CD4-positive, alpha-beta T cell (primary cell): ENCODE measurements at regions of chr17 and their contacts with region 1.

Region 1: DNA sequence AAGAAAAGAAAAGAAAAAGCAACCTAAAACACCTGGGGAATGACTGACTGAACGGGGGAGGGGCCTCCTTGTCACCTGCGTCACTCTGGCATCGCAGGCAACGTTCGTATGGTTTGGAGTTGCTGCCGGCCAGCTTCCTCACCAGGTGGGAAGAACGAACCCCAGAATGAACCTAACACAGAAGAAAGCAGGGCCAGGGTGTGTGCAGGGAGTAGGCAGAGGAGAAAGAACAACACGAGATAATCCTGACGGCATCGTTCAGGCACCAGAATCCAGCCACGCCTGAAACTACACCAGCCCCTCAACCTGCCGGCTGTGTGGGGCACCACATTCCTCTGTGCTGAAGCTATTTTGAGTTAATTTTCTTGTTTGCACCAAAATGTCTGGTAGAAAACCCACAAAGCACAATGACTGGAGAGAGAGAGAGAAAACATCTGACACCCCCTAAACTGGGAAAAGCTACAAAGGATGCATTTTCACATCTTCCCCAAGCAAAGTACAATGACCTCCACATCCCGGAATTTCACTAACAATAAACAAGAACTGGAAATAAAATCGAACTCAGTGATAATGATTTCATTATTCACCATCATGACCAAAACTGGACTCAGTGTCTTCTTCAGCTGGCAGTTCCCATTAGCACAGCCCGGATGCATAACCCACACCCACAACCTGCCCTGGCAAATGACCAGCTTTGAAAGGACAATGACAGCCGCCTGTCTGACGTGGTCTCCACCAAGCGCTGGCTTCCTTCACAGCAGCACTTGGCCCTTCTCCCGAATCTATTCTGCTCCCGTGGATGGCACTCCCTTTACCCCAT is 23.6 kb downstream of the RAB40B start:
- DNase-seq: no peak
- ATAC-seq: no peak
- H3K4me3 ChIP-seq: no peak overlapping the region
- H3K4me3 Mint-ChIP-seq: no peak overlapping the region
- H3K27ac ChIP-seq: no peak overlapping the region
- H3K27ac Mint-ChIP-seq: no peak overlapping the region
- H3K4me1 ChIP-seq: no peaks in the 10 kb centered on the region
- H3K4me1 Mint-ChIP-seq: peaks cover 5% of the 10 kb centered on the region
- H3K27me3 ChIP-seq: no peaks in the 10 kb centered on the region
- H3K27me3 Mint-ChIP-seq: no peaks in the 10 kb centered on the region
- CTCF ChIP-seq: no peak

Region 2: GRCh38 chr17:82917691-82918345 is 243.0 kb after region 1 on chr17:
- CTCF ChIA-PET with region 1: no interaction called
- POLR2A ChIA-PET with region 1: no interaction called
- intact Hi-C with region 1: loop called in 1 of 2 experiments (anchors 10 kb)
- DNase-seq: peak in 11 of 14 experiments; percentile 6 to 62 (median 34)
- ATAC-seq: no peak
- H3K4me3 ChIP-seq: no peak overlapping the region
- H3K4me3 Mint-ChIP-seq: no peak overlapping the region
- H3K27ac ChIP-seq: no peak overlapping the region
- H3K27ac Mint-ChIP-seq: no peak overlapping the region
- H3K4me1 ChIP-seq: no peaks in the 10 kb centered on the region
- H3K4me1 Mint-ChIP-seq: no peaks in the 10 kb centered on the region
- H3K27me3 ChIP-seq: no peaks in the 10 kb centered on the region
- H3K27me3 Mint-ChIP-seq: no peaks in the 10 kb centered on the region
- CTCF ChIP-seq: peak; percentile 31